Motor neuron (in vitro differentiated cells): ENCODE measurements at regions of chr3 and their contacts with region 1.

Region 1: GRCh38 chr3:171162986-171163723 is 136.6 kb upstream of the SLC2A2 start:
- ATAC-seq: no peak
- H3K4me3 ChIP-seq: no peak overlapping the region
- H3K27ac ChIP-seq: no peak overlapping the region
- H3K4me1 ChIP-seq: peaks cover 6 to 15% of the 10 kb centered on the region in 2 donors

Region 2: GRCh38 chr3:170961616-170962400 is 201.3 kb before region 1 on chr3:
- in situ Hi-C with region 1: loop called in 1 of 9 experiments (anchors 25 kb)
- ATAC-seq: peak in 7 of 8 experiments; percentile 24 to 89 (median 71)
- H3K4me3 ChIP-seq: no peak overlapping the region
- H3K27ac ChIP-seq: no peak overlapping the region
- H3K4me1 ChIP-seq: no peaks in the 10 kb centered on the region

Region 3: DNA sequence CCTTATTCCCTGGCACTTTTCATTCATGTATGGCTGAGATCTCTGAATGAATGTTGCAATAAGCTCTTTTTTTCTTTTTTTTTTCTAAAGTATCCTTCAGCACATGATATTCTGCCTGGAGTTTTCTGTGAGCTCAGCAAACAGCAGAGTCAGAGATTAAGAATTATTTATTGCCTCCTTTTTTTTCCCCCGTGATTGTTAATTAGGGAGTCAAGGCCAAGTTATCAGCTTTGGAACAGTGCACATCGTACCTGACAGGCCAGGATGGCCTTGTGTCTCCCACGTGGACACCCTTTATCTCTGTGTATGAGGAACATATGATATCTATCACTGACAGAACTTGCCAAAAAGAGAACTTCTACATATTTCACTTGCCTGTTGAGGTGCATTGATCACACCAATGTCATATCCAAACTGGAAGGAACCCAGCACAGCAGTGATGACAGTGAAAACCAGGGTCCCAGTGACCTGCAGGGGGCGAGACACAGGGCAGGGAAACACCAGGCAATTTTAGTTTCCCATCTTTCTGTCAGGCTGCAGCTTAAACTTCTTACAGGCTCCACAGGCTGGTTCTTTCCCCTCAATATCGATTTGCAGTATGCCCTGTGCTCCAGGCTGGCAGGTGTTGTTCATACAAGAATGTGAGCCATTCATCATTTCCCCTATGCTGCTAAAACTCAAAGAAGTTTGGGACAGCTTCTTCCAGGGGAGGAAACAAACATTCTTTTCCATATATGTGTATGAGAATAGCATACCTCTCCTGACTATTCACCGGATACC is 144.8 kb before region 1 on chr3:
- in situ Hi-C with region 1: no loop called
- ATAC-seq: no peak
- H3K4me3 ChIP-seq: no peak overlapping the region
- H3K27ac ChIP-seq: no peak overlapping the region
- H3K4me1 ChIP-seq: no peaks in the 10 kb centered on the region

Region 4: GRCh38 chr3:171049861-171050444 is 113.2 kb before region 1 on chr3:
- in situ Hi-C with region 1: loop called in 3 of 9 experiments (anchors 10 to 25 kb)
- ATAC-seq: peak in 6 of 8 experiments; percentile 42 to 98 (median 76)
- H3K4me3 ChIP-seq: no peak overlapping the region
- H3K27ac ChIP-seq: no peak overlapping the region
- H3K4me1 ChIP-seq: no peaks in the 10 kb centered on the region

Region 5: GRCh38 chr3:171806200-171807128 is 643.3 kb after region 1 on chr3:
- in situ Hi-C with region 1: no loop called
- ATAC-seq: peak in 2 of 8 experiments; percentile 1 to 2
- H3K4me3 ChIP-seq: no peak overlapping the region
- H3K27ac ChIP-seq: no peak overlapping the region
- H3K4me1 ChIP-seq: peaks cover 0 to 2% of the 10 kb centered on the region in 2 donors